AG04450 (cell line): ENCODE measurements at regions of chr17 and their contacts with region 1.

Region 1: DNA sequence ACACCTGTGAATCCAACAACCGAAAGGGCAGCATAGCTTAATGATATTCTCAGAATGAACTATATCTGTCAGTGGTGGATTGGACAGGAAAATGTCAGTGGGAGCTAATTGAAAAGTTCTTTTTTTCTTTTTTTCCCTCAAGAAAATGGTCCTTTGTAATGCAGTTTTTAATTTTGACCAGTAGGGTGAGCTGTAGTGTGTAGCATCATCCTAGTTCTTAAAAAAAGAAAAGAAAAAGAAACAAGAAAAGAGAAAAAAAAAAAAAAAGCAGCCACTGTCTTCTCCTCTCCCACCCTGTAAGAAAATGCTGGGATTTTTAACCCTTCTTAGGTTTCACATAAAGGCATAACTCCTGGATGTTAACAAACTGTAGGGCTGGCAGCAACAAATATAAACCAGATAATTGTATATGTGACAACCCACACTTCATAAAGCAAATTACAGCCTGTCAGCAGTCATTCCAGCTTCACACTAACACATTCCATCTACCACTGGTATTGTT is 78.1 kb downstream of the SKAP1 start:
- DNase-seq: peak; percentile 26
- H3K4me3 ChIP-seq: no peak overlapping the region
- H3K27ac ChIP-seq: no peak overlapping the region
- H3K27me3 ChIP-seq: peaks cover 35% of the 10 kb centered on the region
- CTCF ChIP-seq: peak; percentile 71

Region 2: GRCh38 chr17:48307814-48308411 is 44.0 kb before region 1 on chr17:
- CTCF ChIA-PET with region 1: interaction called, 13 read pairs
- POLR2A ChIA-PET with region 1: no interaction called
- DNase-seq: peak; percentile 32
- H3K4me3 ChIP-seq: no peak overlapping the region
- H3K27ac ChIP-seq: no peak overlapping the region
- H3K27me3 ChIP-seq: peaks cover 51% of the 10 kb centered on the region
- CTCF ChIP-seq: peak; percentile 96

Region 3: DNA sequence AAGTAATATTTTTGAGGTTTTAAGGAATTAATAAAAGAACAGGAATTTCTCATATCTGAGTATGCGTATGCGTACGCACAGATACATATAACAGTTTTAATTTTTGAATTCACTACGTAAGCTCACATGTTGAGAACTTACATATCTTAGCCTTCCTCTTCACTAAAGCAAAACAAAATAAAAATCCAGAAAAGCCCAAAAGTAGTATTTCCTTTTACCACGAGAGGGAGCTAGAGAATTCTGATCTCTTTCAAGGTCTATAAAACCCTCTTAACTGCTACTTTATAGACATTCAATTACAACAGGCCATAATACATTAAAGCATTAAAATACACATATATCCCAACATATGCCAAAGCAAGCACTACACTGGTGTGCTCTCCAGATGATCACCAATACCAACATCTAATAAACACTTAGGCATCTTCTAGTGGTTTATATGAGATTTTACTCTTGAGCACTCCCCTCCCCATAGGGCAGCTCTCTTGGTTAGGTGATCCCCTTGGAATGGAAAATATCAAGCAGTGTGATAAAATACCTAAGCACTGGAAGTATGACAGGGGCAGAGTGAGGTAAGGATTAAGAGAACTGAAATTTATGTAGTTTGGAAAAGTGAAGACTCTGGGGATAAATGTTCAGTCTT is 15.9 kb before region 1 on chr17:
- CTCF ChIA-PET with region 1: interaction called, 21 read pairs
- POLR2A ChIA-PET with region 1: no interaction called
- DNase-seq: peak; percentile 26
- H3K4me3 ChIP-seq: no peak overlapping the region
- H3K27ac ChIP-seq: no peak overlapping the region
- H3K27me3 ChIP-seq: peaks cover 43% of the 10 kb centered on the region
- CTCF ChIP-seq: peak; percentile 70

Region 4: DNA sequence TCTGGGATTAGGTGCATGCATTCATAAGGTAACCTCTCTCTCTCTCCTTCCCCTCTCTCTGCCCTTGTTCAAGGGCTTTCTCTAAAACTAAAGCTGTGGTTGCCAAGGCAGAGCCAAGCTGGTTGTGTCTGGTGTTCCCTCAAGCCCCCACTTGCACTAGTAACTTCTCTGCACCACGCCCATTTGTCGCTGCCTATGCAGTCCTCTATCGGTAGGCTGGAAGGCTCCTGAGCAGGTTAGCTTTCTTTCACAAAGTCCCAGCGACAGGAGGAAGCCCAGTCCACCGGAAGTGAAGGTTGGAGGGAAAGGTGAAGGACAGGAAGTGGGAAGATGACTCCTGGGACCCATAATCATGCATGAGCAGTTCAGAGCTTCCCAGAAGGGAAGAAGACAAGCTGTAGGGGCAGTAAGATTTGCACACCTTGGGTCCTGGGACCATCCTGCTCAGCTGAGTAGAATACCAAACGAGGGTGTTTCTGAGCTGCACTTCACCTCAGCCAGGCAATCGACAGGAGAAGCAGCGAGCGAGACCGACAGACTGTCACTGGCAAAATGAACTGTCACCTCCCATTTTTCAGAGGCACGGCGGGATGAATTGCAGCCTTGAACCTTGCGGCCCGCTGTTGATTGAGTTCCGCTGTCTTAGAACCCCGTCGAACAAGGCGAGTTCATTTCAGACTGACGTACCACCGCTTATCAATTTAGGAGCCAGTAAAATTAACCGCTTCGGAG is 92.8 kb after region 1 on chr17:
- CTCF ChIA-PET with region 1: no interaction called
- POLR2A ChIA-PET with region 1: no interaction called
- DNase-seq: no peak
- H3K4me3 ChIP-seq: no peak overlapping the region
- H3K27ac ChIP-seq: no peak overlapping the region
- H3K27me3 ChIP-seq: peaks cover 38% of the 10 kb centered on the region
- CTCF ChIP-seq: no peak

Region 5: GRCh38 chr17:48457080-48457836 is 105.4 kb after region 1 on chr17:
- CTCF ChIA-PET with region 1: interaction called, 10 read pairs
- POLR2A ChIA-PET with region 1: no interaction called
- DNase-seq: no peak
- H3K4me3 ChIP-seq: no peak overlapping the region
- H3K27ac ChIP-seq: no peak overlapping the region
- H3K27me3 ChIP-seq: peaks cover 34% of the 10 kb centered on the region
- CTCF ChIP-seq: peak; percentile 95

Region 6: DNA sequence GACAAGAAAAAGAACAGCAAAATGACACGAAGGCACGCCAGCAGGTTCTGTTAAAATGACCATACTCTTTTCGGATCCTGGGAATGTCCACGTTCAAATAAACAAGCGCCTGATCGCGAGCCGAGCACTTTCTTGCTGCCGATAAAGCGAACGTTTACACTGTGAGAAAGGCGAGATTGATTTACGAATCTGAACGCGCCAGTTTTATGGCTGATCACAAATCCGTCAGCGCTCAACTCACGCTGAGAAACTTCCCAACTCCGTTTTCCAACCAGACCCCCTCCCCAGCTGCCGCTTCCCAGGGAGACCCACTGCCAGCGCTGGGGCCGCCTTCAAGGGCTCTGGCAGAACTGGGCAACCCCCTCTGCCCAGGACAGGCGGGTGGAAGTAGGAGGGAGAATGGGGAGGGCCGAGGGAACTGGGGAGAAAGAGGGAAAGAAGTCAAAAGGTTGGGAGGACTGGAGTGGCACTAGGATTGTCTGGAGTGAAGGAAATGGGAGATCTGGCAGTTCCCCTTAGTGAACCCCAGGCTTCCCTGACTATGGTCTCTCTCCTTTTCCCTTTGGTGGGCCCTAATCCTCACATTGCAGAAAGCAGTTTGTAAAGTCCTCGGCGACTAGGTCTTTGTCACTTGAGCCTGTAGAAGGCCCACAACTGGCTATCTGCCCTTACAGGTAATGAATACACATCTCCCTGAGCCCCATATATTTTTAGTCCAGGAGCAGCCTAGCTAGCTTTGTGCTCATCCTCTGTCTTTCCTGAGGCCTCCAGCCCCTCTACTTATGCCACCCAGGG is 219.3 kb after region 1 on chr17:
- CTCF ChIA-PET with region 1: interaction called, 13 read pairs
- POLR2A ChIA-PET with region 1: interaction called, 3 read pairs
- DNase-seq: no peak
- H3K4me3 ChIP-seq: peak overlapping the region; percentile 90
- H3K27ac ChIP-seq: peak overlapping the region; percentile 94
- H3K27me3 ChIP-seq: no peaks in the 10 kb centered on the region
- CTCF ChIP-seq: no peak

Region 7: DNA sequence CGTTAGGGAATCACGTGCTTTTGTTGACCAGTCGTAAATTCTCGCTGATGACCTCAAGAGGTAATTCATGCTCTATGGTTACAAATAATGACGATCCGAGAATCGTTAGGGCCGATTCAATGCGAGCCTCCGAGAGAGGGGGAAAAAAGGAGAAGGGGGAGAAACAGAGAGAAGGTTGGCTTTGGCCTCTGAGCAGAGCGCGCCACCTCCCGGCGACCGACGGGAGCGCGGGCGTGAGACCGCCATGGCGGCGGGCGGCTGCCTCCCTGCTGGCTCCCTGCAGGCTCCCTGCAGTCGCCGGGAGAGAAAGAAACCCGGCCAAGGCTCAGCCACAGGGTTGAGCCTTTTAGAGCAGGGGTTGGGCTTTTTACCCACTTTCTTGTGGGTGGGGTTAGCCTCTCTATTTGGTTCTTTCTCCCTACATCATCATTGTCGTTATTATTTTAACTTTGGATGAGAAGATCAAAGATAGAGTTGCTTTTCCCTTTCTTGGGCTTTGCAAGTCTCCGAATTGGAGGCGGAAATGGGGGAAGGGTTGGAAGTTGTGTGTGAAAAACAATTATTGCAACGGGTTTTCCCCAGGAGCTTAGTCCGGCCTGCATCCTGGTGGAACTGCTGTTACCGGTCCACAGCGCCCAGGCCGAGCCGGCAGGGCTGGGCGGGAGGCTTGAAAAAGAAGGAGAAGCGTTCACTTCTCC is 242.1 kb after region 1 on chr17:
- CTCF ChIA-PET with region 1: interaction called, 41 read pairs
- POLR2A ChIA-PET with region 1: interaction called, 6 read pairs
- DNase-seq: peak; percentile 93
- H3K4me3 ChIP-seq: peak overlapping the region; percentile 89
- H3K27ac ChIP-seq: peak overlapping the region; percentile 91
- H3K27me3 ChIP-seq: no peaks in the 10 kb centered on the region
- CTCF ChIP-seq: peak; percentile 95